ENCODE measurements at regions of chr11 and their contacts with region 1.

Region 1: DNA sequence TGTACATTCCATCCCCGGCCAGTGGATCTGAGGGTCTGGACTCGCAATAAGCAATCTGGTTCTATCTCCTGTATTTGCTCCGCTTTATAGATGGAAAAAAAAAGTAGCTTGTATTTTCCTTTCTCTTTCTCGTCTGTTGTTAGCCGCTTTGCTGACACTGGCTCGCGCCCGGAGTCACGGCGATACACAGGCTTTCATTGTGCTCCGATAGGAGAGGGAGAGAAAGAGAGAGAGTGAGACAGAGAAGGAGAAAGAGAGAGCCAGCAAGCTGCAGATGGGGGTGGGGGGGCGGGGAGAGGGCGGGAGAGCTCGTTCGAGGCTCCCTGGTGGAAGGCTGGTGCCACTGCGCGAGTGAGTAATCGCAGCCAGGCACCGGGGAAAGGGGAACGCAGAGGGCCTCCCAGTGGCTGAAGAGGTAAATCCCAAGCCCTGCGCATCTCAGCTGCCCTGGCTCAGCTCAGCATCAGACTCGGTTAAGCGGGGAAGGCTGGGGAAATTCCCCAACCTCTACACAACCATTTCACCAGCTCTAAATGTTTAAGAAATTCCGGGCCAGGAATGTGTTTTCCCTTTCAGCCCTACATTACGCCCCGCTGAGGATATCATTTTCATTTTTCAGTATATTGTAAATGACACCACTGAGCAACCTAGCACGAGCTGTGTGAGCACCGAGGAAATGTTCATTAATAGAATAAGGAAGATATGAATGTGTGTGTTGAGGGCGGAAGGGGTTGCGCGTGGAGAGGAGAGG is at the start of gene MAML2:
- DNase-seq: peak; percentile 82 to 94 (median 85)
- H3K4me3 ChIP-seq: peak within 1 kb of the TSS; percentile 99
- H3K4me3 Mint-ChIP-seq: peak within 1 kb of the TSS; percentile 90 to 99 (median 96)
- H3K27ac ChIP-seq: peak within 1 kb of the TSS; percentile 46
- H3K27ac Mint-ChIP-seq: peak within 1 kb of the TSS; percentile 87 to 94 (median 92)
- H3K4me1 ChIP-seq: peaks cover 37% of the 10 kb centered on the region
- H3K4me1 Mint-ChIP-seq: peaks cover 40 to 44% (median 40%) of the 10 kb centered on the region in 3 donors
- H3K27me3 ChIP-seq: no peaks in the 10 kb centered on the region
- H3K27me3 Mint-ChIP-seq: no peaks in the 10 kb centered on the region
- total RNA-seq, gene MAML2: 15.6 to 15.9 TPM

Region 2: GRCh38 chr11:96012086-96012824 is 330.9 kb before region 1 on chr11:
- CTCF ChIA-PET with region 1: interaction called, 38 read pairs
- POLR2A ChIA-PET with region 1: no interaction called
- DNase-seq: peak in 4 of 5 donors; percentile 9 to 77 (median 68)
- H3K4me3 ChIP-seq: no peak overlapping the region
- H3K4me3 Mint-ChIP-seq: peak overlapping the region; percentile 8 to 58 (median 39)
- H3K27ac ChIP-seq: no peak overlapping the region
- H3K27ac Mint-ChIP-seq: peak overlapping the region; percentile 26 to 93 (median 78)
- H3K4me1 ChIP-seq: peaks cover 54% of the 10 kb centered on the region
- H3K4me1 Mint-ChIP-seq: peaks cover 4 to 50% (median 9%) of the 10 kb centered on the region in 3 donors
- H3K27me3 ChIP-seq: no peaks in the 10 kb centered on the region
- H3K27me3 Mint-ChIP-seq: no peaks in the 10 kb centered on the region

Region 3: GRCh38 chr11:96070461-96070860 is 272.7 kb before region 1 on chr11:
- CTCF ChIA-PET with region 1: interaction called, 43 read pairs
- POLR2A ChIA-PET with region 1: no interaction called
- DNase-seq: no peak
- H3K4me3 ChIP-seq: no peak overlapping the region
- H3K4me3 Mint-ChIP-seq: no peak overlapping the region
- H3K27ac ChIP-seq: no peak overlapping the region
- H3K27ac Mint-ChIP-seq: no peak overlapping the region
- H3K4me1 ChIP-seq: peaks cover 15% of the 10 kb centered on the region
- H3K4me1 Mint-ChIP-seq: peaks cover 32 to 49% (median 33%) of the 10 kb centered on the region in 3 donors
- H3K27me3 ChIP-seq: no peaks in the 10 kb centered on the region
- H3K27me3 Mint-ChIP-seq: no peaks in the 10 kb centered on the region

Region 4: DNA sequence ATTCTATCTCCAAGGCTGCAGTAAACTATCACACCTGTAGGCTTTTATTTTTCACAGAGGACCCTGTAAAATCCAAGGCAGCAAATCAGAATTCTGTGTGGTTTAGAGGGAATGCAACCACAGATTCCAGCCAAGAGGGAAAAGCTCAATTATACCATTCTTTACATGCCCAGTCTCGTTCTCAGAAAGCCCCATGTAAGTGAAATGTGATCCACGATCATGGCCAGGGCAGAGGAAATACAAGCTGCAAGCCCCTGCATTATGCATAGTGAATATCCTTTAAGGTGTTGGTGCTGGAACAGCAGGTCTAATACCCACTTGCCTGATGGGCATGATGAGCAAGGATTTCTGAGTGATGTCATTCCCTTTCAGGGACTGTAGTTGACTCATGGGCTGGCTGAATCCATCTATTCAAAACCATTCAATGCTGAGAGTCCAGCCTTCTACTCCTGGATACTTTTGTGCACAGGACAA is 220.5 kb before region 1 on chr11:
- CTCF ChIA-PET with region 1: interaction called, 21 read pairs
- POLR2A ChIA-PET with region 1: no interaction called
- DNase-seq: no peak
- H3K4me3 ChIP-seq: no peak overlapping the region
- H3K4me3 Mint-ChIP-seq: peak overlapping the region in 2 of 7 donors; percentile 59 to 63
- H3K27ac ChIP-seq: no peak overlapping the region
- H3K27ac Mint-ChIP-seq: peak overlapping the region in 3 of 8 donors; percentile 10 to 65 (median 60)
- H3K4me1 ChIP-seq: peaks cover 21% of the 10 kb centered on the region
- H3K4me1 Mint-ChIP-seq: peaks cover 36 to 54% (median 52%) of the 10 kb centered on the region in 3 donors
- H3K27me3 ChIP-seq: no peaks in the 10 kb centered on the region
- H3K27me3 Mint-ChIP-seq: no peaks in the 10 kb centered on the region

Region 5: DNA sequence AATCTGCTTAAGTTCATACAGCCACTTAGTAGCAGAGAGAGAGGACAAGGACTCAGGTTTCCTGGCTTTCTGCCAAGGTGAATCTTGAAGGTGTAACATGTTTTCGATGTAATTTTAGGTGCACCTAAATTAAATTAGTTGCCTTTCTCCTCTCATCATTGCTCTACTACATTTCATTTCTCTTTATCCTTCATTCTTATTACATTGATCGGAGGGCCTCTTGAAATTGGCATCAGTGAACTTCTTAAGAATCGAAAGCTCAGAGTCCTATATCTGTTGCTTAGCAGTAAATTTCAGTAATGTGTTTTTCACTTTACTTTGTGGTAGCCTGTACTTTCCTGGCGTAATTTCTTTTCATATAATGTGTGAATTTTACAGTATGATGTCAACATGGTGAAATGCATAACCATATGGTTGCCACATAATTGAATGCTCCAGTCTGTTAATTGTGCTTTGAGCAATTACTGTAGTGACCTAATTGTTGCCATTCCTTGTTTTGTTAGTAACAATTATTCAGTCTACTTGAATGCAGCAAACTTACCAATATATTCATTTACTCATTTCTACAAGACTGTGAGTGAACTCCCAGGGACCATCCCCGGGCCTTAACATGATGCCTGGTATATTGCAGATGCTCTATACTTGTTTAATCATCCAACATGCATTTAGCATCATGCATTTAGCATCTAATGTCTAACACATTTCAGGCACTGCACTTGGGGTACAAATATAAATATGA is 138.2 kb before region 1 on chr11:
- CTCF ChIA-PET with region 1: interaction called, 21 read pairs
- POLR2A ChIA-PET with region 1: interaction called, 4 read pairs
- DNase-seq: peak in 2 of 5 donors; percentile 54 to 65
- H3K4me3 ChIP-seq: no peak overlapping the region
- H3K4me3 Mint-ChIP-seq: peak overlapping the region; percentile 52 to 70 (median 64)
- H3K27ac ChIP-seq: peak overlapping the region; percentile 66
- H3K27ac Mint-ChIP-seq: peak overlapping the region; percentile 82 to 94 (median 89)
- H3K4me1 ChIP-seq: peaks cover 71% of the 10 kb centered on the region
- H3K4me1 Mint-ChIP-seq: peaks cover 73 to 91% (median 81%) of the 10 kb centered on the region in 3 donors
- H3K27me3 ChIP-seq: no peaks in the 10 kb centered on the region
- H3K27me3 Mint-ChIP-seq: no peaks in the 10 kb centered on the region

Region 6: GRCh38 chr11:96254087-96254486 is 89.0 kb before region 1 on chr11:
- CTCF ChIA-PET with region 1: interaction called, 10 read pairs
- POLR2A ChIA-PET with region 1: interaction called, 10 read pairs
- DNase-seq: peak in 3 of 5 donors; percentile 44 to 58 (median 47)
- H3K4me3 ChIP-seq: peak overlapping the region; percentile 16
- H3K4me3 Mint-ChIP-seq: peak overlapping the region; percentile 45 to 82 (median 75)
- H3K27ac ChIP-seq: no peak overlapping the region
- H3K27ac Mint-ChIP-seq: peak overlapping the region; percentile 27 to 95 (median 72)
- H3K4me1 ChIP-seq: peaks cover 79% of the 10 kb centered on the region
- H3K4me1 Mint-ChIP-seq: peaks cover 86 to 94% (median 90%) of the 10 kb centered on the region in 3 donors
- H3K27me3 ChIP-seq: no peaks in the 10 kb centered on the region
- H3K27me3 Mint-ChIP-seq: no peaks in the 10 kb centered on the region

Region 7: DNA sequence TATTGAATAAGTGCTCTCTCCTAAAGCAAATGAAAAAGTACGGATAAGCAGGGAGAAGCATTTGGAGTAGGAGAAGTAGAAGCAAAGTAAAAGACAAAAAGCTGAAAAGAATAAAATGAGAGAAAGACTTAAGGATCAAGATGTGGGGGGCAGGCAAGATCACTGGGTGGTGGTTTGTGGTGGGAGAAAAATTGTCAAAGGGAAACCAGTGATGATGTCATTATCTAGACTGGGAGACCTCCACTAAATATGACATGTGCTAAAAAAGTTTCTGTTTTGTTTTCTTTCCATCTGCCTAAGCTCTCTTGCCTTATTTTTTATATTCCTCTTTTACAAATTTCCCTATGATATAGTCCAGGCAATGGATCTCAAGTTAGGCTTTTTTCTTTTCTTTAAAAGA is 14.7 kb after region 1 on chr11:
- CTCF ChIA-PET with region 1: interaction called, 11 read pairs
- POLR2A ChIA-PET with region 1: interaction called, 6 read pairs
- DNase-seq: peak in 2 of 5 donors; percentile 12 to 41
- H3K4me3 ChIP-seq: no peak overlapping the region
- H3K4me3 Mint-ChIP-seq: peak overlapping the region in 1 of 7 donors; percentile 18
- H3K27ac ChIP-seq: no peak overlapping the region
- H3K27ac Mint-ChIP-seq: peak overlapping the region in 2 of 8 donors; percentile 3 to 73
- H3K4me1 ChIP-seq: no peaks in the 10 kb centered on the region
- H3K4me1 Mint-ChIP-seq: peaks cover 4 to 23% (median 20%) of the 10 kb centered on the region in 3 donors
- H3K27me3 ChIP-seq: no peaks in the 10 kb centered on the region
- H3K27me3 Mint-ChIP-seq: no peaks in the 10 kb centered on the region

Measured in CD8-positive, alpha-beta memory T cell (primary cell).